ENCODE measurements at regions of chr17 and their contacts with region 1.

Region 1: DNA sequence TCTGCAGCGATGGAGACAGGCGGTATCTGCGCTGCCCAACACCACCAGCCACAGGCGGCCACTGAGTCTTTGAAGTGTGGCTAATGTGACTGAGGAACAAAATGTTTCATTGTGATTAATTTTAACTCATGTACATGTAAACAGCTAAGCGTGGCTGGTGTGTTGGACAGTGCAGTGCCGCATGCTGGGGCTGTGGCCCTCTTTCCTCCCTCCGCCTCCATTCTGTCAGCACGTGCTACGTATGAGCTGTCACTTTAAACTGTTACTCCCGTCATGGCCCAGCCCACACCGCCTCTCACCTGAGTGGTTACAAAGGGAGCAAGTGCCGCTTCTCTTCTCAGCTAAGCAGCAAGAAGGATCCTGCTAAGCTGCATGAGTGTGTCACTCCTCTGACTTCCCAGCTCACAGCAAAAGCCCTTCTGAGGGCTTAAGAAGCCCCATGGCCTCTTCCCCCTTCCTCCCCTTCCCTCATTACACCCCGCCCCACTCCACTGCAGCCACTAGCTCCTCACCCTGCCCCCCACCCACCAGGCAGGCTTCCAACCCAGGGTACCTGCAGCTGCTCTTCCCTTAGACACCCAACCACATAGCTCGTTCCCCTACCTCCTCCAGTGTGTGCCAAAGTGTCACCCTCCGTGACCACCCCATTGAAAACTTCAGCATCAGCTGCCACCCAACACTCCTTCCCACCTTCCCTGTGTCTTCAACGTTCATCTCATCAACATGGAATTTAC is 15.0 kb downstream of the HASPIN start:
- ATAC-seq: peak in 7 of 8 experiments; percentile 9 to 73 (median 58)
- H3K4me3 ChIP-seq: no peak overlapping the region
- H3K27ac ChIP-seq: no peak overlapping the region
- H3K4me1 ChIP-seq: peaks cover 0 to 8% of the 10 kb centered on the region in 2 donors

Region 2: GRCh38 chr17:3796110-3796821 is 57.5 kb after region 1 on chr17:
- in situ Hi-C with region 1: loop called in 1 of 9 experiments (anchors 10 kb)
- ATAC-seq: no peak
- H3K4me3 ChIP-seq: no peak overlapping the region
- H3K27ac ChIP-seq: no peak overlapping the region
- H3K4me1 ChIP-seq: peaks cover 4% of the 10 kb centered on the region in 2 donors

Measured in motor neuron (in vitro differentiated cells).